Dorsolateral prefrontal cortex (tissue), 120 donors: ENCODE measurements at regions of chr16 and their contacts with region 1.

Region 1: DNA sequence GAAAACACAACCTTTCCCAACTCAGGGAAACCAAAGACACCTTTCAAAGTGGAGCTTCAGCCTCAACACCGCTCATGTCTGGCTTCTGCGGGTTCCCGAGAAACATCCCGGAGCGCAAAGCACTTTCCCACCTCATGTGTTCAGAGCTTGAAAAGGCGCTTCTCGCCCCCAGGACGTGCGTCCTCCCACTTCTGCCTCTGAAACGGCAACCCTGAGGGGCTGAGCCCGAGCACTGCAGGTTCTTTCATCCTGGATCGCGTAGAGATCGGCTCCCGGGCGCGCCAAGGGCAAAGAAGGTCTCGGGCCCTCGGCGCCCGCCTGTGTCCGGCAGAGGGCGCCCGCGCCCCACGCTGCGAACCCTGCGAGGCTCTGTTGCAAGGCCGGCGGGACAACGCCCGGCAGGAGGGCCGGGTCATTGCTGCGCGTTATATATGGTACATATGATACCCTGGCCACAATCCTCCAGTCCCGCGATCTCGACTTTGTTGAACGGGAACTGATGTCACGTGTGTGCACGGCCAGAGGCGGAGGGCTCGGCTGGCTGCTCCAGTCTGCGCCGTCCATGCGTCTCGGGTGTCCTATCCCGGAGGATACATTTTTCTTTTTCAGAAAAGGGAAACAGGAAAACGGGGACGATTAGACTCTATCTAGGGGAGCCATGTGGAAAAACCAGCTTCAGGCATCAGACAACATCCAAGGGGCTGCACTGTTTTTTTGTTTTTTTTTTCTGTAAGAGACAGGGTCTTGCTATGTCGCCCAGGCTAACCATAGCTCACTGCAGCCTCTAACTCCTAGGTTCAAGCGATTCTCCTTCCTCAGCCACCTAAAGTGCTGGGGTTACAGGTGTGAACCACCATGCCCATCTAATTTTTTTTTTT is 19.1 kb downstream of the COQ7 start:
- DNase-seq: peak; percentile 72 to 88 (median 80)
- H3K4me3 ChIP-seq: peak overlapping the region; percentile 33 to 74 (median 59)
- H3K27ac ChIP-seq: peak overlapping the region in 45 of 59 donors; percentile 4 to 84 (median 52)
- H3K27me3 ChIP-seq: no peaks in the 10 kb centered on the region
- CTCF ChIP-seq: peak; percentile 54 to 100 (median 99)

Region 2: GRCh38 chr16:19196871-19197270 is 110.3 kb after region 1 on chr16:
- intact Hi-C with region 1: no loop called
- DNase-seq: no peak
- H3K4me3 ChIP-seq: no peak overlapping the region
- H3K27ac ChIP-seq: peak overlapping the region in 7 of 59 donors; percentile 3 to 52 (median 20)
- H3K27me3 ChIP-seq: no peaks in the 10 kb centered on the region
- CTCF ChIP-seq: no peak

Region 3: GRCh38 chr16:19375561-19376158 is 289.1 kb after region 1 on chr16:
- intact Hi-C with region 1: loop called (anchors 1 to 2 kb)
- DNase-seq: peak in 7 of 10 donors; percentile 15 to 58 (median 45)
- H3K4me3 ChIP-seq: no peak overlapping the region
- H3K27ac ChIP-seq: no peak overlapping the region
- H3K27me3 ChIP-seq: no peaks in the 10 kb centered on the region
- CTCF ChIP-seq: peak; percentile 71 to 96 (median 88)

Region 4: DNA sequence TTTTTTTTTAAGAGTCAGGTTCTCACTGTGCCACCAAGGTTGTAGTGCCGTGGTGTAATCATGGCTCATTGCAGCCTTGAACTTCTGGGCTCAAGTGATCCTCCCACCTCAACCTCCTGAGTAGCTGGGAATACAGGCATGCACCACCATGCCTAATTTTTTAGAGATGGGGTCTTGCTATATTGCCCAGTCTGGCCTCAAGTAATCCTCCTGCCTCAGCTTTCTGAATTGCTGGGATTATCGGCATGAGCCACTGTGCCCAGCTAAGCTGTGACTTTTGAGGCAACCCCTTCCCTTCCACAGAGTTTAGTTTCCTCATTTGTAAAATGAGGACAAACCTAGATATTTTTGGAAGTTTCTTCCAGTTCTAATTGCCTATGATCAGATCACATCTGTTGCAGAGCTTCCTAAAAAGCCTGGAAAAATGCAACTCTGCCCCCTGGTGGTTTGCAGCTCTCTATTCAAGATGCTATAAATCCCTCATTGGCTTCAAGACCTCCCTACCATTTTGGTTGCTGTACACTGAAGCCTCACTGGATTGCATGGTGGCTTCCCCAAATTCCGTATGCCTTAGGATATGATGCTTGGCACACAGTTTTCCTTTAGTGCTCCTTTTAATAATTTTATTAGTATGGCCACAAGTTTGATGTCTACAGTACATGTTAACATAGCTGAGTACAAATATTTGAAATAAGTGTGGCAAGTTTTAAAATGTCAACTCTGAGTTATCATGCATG is 416.0 kb after region 1 on chr16:
- intact Hi-C with region 1: loop called (anchors 5 kb)
- DNase-seq: peak; percentile 43 to 90 (median 78)
- H3K4me3 ChIP-seq: no peak overlapping the region
- H3K27ac ChIP-seq: peak overlapping the region in 9 of 59 donors; percentile 7 to 59 (median 22)
- H3K27me3 ChIP-seq: no peaks in the 10 kb centered on the region
- CTCF ChIP-seq: peak; percentile 67 to 92 (median 82)